ENCODE measurements at regions of chr10 and their contacts with region 1.

Region 1: DNA sequence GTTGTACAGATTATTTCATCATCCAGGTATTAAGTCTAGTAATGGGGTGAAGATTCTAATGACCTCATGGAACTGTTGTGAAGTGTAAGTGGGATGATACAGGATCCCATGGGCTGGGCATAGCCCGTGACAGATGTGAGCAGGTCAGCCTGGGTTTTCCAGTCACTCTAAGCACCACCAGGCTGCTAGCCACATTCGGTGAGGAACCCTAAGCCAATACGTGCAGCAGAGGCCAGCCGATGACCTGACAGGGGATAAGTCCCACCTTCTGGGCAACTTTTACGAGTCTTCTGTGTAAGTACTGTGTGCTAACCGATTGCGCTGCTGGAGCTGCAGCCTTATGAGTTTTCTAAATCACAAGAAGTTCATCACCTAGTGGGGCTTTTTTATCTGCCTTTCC is 7.3 kb downstream of the ZNF503 start:
- DNase-seq: peak in 1 of 5 donors; percentile 19
- H3K4me3 ChIP-seq: no peak overlapping the region
- H3K27ac ChIP-seq: no peak overlapping the region
- H3K4me1 ChIP-seq: peaks cover 3% of the 10 kb centered on the region
- H3K27me3 ChIP-seq: no peaks in the 10 kb centered on the region
- CTCF ChIP-seq: no peak
- EP300 ChIP-seq: no peak
- POLR2A ChIP-seq: no peak

Region 2: DNA sequence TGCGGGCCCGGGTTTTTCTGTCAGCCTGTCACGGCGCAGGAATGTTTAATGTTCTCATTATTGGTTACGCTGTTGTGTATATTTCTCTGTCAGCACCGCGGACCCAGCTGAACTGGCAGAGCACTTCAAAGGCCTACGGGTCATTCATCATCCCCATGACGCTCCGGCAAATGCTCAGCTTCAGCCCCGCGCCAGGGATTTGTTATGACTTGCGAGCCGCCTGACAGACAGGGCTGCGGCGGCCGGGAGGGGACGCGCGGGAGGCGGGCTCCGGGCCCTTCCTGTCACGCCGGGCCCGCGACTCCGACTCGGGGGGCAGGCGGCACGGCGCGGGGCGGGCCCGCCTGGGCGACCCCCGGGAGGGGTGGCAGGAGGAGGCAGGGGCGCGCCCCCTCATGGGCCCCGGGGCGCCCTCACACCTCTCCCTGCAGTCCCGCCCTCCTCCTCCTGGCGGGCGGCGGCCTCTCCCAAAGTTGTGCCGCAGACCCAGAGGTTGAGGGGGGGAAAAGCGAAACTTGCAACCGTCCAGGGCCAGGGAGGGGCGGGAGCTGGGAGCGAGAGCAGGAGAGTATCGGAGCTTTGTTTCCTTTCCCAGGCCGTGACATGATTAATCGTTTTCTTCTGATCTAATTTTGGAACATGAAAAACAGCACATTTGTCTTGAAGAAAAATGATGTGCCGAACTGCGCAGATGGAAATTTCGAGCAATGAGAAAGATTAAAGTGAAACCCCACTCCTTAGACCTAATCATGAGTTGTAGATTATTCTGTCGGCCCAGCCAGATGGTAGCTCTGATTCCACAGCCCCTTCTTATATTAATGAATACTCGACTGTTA is 99.1 kb before region 1 on chr10:
- intact Hi-C with region 1: loop called in 3 of 4 experiments (anchors 5 to 10 kb)
- DNase-seq: peak; percentile 79 to 86 (median 83)
- H3K4me3 ChIP-seq: peak overlapping the region; percentile 59
- H3K27ac ChIP-seq: peak overlapping the region; percentile 76 to 95
- H3K4me1 ChIP-seq: peaks cover 11% of the 10 kb centered on the region
- H3K27me3 ChIP-seq: no peaks in the 10 kb centered on the region
- CTCF ChIP-seq: peak in 2 of 3 donors; percentile 50 to 66
- EP300 ChIP-seq: no peak
- POLR2A ChIP-seq: peak; percentile 35

Region 3: DNA sequence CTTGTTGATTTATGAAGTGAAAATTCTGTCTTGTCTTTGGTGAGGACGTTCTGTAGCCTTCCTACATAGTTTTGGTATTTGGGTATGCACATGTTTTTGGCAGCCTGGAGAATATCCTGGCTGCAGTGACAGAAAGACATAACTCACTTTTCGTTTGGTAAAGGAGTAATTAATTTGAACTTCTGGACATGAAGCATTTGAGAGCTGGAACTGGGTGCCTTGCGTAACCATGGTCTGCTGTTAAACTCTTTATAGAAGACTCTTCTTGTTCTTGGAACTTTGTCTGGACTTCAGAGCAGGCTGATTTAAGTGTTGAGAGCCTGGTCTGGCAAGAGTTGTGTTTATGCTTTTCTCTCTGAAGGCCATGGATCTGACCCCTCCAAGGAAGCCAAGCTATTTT is 268.5 kb after region 1 on chr10:
- intact Hi-C with region 1: no loop called
- DNase-seq: peak in 4 of 5 donors; percentile 35 to 79 (median 68)
- H3K4me3 ChIP-seq: no peak overlapping the region
- H3K27ac ChIP-seq: peak overlapping the region in 1 of 2 donors; percentile 70
- H3K4me1 ChIP-seq: peaks cover 17% of the 10 kb centered on the region
- H3K27me3 ChIP-seq: no peaks in the 10 kb centered on the region
- CTCF ChIP-seq: no peak
- EP300 ChIP-seq: no peak
- POLR2A ChIP-seq: no peak

Region 4: GRCh38 chr10:75922435-75922834 is 528.2 kb after region 1 on chr10:
- intact Hi-C with region 1: no loop called
- DNase-seq: no peak
- H3K4me3 ChIP-seq: no peak overlapping the region
- H3K27ac ChIP-seq: no peak overlapping the region
- H3K4me1 ChIP-seq: peaks cover 3% of the 10 kb centered on the region
- H3K27me3 ChIP-seq: no peaks in the 10 kb centered on the region
- CTCF ChIP-seq: no peak
- EP300 ChIP-seq: no peak
- POLR2A ChIP-seq: no peak